Activated CD8-positive, alpha-beta T cell treated with anti-CD3 and anti-CD28 coated beads for 36 hours (primary cell): ENCODE measurements at regions of chr19 and their contacts with region 1.

Region 1: GRCh38 chr19:1794424-1795172 is 17.5 kb downstream of the ATP8B3 start:
- DNase-seq: peak; percentile 43
- ATAC-seq: peak; percentile 34
- H3K4me3 Mint-ChIP-seq: no peak overlapping the region
- H3K27ac Mint-ChIP-seq: no peak overlapping the region
- H3K4me1 Mint-ChIP-seq: peaks cover 8% of the 10 kb centered on the region
- H3K27me3 Mint-ChIP-seq: peaks cover 6% of the 10 kb centered on the region
- CTCF ChIP-seq: no peak

Region 2: DNA sequence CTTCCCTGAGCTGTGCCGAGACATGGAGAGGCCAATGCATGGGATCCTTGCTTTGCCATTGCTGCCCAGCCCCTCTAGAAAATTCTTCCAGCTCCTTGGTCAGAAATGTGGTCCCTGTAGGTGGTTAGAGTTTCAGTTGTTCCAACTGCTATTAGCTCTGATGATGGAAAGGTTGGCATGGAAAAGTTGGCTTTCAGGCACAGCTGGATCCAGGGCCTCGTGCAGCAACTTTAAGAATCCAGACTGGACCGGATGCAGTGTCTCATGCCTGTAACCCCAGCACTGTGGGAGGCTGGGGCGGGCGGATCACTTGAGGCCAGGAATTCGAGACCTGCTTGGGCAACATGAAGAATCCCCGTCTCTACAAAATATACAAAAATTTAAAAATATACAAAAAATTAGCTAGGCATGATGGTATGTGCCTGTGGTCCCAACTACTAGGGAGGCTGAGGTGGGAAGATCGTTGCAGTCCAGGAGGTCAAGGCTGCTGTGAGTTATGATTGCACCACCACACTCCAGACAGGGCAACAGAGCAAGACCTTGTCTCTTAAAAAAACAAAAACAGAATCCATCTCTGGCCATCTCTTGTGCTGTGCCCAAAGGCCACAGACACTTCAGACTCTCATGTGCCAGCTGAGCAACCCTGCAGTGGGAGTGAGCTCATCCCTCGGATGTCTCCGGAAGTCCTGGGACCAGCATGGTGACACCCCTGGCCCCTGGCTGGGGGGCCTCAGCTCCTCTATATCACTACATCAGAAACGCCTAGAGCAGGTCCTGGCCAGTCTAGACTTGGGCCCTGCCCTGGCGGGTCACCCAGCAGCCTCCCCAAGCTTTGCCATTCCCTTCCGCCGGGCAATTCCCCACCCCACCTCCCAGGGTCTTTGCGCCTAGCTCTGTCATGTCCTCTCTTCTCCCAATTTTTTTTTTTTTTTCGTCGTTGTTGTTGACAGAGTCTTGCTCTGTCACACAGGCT is 243.2 kb before region 1 on chr19:
- CTCF ChIA-PET with region 1: interaction called, 10 read pairs
- POLR2A ChIA-PET with region 1: no interaction called
- intact Hi-C with region 1: no loop called
- DNase-seq: no peak
- ATAC-seq: no peak
- H3K4me3 Mint-ChIP-seq: no peak overlapping the region
- H3K27ac Mint-ChIP-seq: no peak overlapping the region
- H3K4me1 Mint-ChIP-seq: no peaks in the 10 kb centered on the region
- H3K27me3 Mint-ChIP-seq: peaks cover 6% of the 10 kb centered on the region
- CTCF ChIP-seq: no peak

Region 3: DNA sequence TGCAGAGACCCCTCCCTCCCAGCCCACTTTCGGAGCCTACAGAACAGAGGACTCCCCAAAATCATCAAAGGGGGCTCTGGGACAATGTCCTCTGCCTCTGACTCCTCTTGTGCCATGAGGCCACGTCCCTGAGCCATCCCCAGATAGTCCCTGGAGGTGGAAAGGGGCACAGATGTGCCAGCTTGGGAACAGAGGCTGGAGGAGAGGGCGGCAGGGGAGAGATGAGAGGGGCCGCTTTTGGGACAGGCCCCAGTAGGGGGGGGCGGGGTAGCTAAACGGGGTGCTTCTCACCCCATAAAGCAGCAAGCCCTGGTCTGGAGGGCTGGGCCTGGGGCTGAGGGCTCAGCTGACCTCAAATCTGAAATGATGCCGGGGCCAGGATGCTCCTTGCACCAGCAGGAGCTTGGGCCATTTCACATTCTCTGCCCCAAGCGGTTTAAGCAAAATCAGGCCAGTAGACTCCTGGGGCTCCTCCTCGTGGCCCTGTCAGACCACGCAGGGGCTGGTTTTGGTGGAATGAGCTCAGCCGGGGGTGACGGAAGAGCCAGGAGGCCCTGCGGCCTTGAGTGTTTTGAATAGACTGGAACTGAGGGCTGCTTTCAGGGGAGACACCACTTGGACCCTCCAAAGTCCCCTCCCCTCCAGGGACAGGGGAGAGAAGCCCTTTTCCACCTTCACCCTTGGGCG is 14.2 kb before region 1 on chr19:
- CTCF ChIA-PET with region 1: interaction called, 40 read pairs
- POLR2A ChIA-PET with region 1: interaction called, 4 read pairs
- intact Hi-C with region 1: no loop called
- DNase-seq: no peak
- ATAC-seq: peak; percentile 30
- H3K4me3 Mint-ChIP-seq: no peak overlapping the region
- H3K27ac Mint-ChIP-seq: no peak overlapping the region
- H3K4me1 Mint-ChIP-seq: peaks cover 2% of the 10 kb centered on the region
- H3K27me3 Mint-ChIP-seq: peaks cover 38% of the 10 kb centered on the region
- CTCF ChIP-seq: no peak

Region 4: DNA sequence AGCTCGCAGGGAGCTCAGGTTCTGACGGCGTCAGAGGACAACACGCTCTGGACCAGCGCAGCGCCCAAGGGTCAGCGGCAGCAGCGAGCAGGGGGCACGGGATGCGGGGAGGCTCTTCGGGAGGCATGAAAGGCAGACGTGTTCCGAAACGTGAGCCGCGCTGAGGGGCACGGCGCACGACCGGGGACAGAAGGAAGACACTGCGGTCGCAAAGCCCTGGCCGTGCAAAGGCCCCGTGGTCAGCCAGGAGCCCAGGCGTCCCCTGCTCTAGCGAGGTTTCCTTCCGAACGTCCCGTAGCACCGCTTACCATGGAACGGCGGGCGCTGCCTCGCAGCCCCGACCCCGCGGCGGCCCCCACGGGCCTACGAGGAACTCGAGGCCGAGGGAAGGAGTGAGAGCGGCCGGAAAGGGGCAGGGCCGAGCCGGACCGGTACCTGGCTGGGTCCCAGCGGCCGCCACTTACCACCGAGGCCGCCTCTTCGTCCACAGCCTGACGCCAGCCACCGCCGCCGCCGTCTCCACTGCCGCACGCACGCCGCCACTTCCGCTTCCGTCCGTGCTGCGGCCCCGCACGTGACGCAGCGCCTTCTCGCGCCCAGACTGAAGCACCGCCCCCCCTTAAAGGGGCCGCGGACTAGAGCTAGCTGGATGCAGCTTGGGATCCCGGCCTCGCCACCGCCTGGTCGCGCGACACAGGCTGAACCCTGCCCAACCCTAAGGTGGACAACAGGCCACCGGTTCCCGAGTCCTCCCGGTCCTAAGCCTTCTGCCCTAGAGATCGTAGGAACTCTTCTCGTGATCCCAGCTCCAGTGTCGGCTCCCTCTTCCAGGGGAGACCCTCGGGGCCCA is 81.3 kb after region 1 on chr19:
- CTCF ChIA-PET with region 1: no interaction called
- POLR2A ChIA-PET with region 1: no interaction called
- intact Hi-C with region 1: no loop called
- DNase-seq: peak; percentile 94
- ATAC-seq: peak; percentile 93
- H3K4me3 Mint-ChIP-seq: peak overlapping the region; percentile 99
- H3K27ac Mint-ChIP-seq: peak overlapping the region; percentile 97
- H3K4me1 Mint-ChIP-seq: peaks cover 29% of the 10 kb centered on the region
- H3K27me3 Mint-ChIP-seq: no peaks in the 10 kb centered on the region
- CTCF ChIP-seq: no peak